CD14-positive monocyte (primary cell): ENCODE measurements at regions of chr10 and their contacts with region 1.

Region 1: GRCh38 chr10:124388823-124389612 is 29.7 kb downstream of the OAT start:
- DNase-seq: peak; percentile 86 to 90 (median 88)
- H3K4me3 ChIP-seq: peak overlapping the region; percentile 28 to 69 (median 35)
- H3K4me3 Mint-ChIP-seq: peak overlapping the region; percentile 52 to 55
- H3K27ac ChIP-seq: peak overlapping the region in 1 of 2 donors; percentile 72
- H3K27ac Mint-ChIP-seq: peak overlapping the region in 3 of 7 donors; percentile 22 to 71 (median 57)
- H3K4me1 ChIP-seq: peaks cover 13 to 15% of the 10 kb centered on the region in 2 donors
- H3K4me1 Mint-ChIP-seq: peaks cover 6% of the 10 kb centered on the region
- H3K27me3 ChIP-seq: peaks cover 0 to 16% of the 10 kb centered on the region in 2 donors
- H3K27me3 Mint-ChIP-seq: peaks cover 5 to 25% (median 18%) of the 10 kb centered on the region in 3 donors
- CTCF ChIP-seq: peak; percentile 91

Region 2: DNA sequence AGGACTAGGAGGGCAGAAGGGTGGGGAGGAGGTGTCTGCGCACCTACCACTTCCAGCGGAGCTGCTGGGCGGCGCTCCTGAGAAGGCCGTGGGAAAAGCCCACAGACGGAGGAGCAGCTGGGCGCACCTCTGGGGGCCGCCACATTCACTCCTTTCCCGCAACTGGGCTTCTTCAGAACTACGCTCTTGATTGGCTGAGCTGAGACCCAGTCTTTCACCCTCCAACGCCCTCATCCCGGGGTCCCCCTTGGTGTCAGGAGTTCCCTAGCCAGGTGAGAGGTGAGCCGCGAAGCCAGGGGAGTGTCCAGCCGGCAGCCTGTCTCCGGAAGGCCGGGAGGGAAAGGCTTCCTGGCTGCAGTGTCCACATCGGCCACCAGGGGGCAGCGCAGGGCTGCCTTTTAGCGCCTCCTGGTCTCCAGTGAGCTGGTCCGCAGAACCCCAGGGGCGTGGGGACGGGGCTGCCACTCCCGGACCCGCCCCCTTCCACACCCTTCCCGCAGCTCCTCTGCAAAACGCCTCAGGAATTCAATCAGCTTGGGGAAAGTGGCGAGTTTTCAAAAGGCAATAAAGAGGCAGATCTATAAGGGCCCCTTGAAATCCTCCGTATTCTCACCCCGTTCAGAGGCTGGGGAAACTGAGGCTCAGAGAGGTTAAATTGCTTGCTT is 394.5 kb before region 1 on chr10:
- intact Hi-C with region 1: loop called (anchors 1 to 5 kb)
- DNase-seq: peak; percentile 81 to 83 (median 81)
- H3K4me3 ChIP-seq: peak overlapping the region; percentile 21 to 75 (median 28)
- H3K4me3 Mint-ChIP-seq: peak overlapping the region; percentile 74 to 79
- H3K27ac ChIP-seq: peak overlapping the region in 1 of 2 donors; percentile 98
- H3K27ac Mint-ChIP-seq: peak overlapping the region; percentile 57 to 100 (median 98)
- H3K4me1 ChIP-seq: peaks cover 56 to 64% of the 10 kb centered on the region in 2 donors
- H3K4me1 Mint-ChIP-seq: peaks cover 63% of the 10 kb centered on the region
- H3K27me3 ChIP-seq: peaks cover 31 to 46% of the 10 kb centered on the region in 2 donors
- H3K27me3 Mint-ChIP-seq: peaks cover 47 to 58% (median 51%) of the 10 kb centered on the region in 3 donors
- CTCF ChIP-seq: peak; percentile 98

Region 3: GRCh38 chr10:124025660-124026588 is 363.1 kb before region 1 on chr10:
- intact Hi-C with region 1: loop called in 1 of 2 experiments (anchors 10 kb)
- DNase-seq: peak; percentile 56 to 68 (median 66)
- H3K4me3 ChIP-seq: no peak overlapping the region
- H3K4me3 Mint-ChIP-seq: peak overlapping the region in 1 of 2 donors; percentile 30
- H3K27ac ChIP-seq: no peak overlapping the region
- H3K27ac Mint-ChIP-seq: peak overlapping the region in 6 of 7 donors; percentile 8 to 81 (median 69)
- H3K4me1 ChIP-seq: peaks cover 12 to 38% of the 10 kb centered on the region in 2 donors
- H3K4me1 Mint-ChIP-seq: peaks cover 29% of the 10 kb centered on the region
- H3K27me3 ChIP-seq: peaks cover 0 to 16% of the 10 kb centered on the region in 2 donors
- H3K27me3 Mint-ChIP-seq: peaks cover 5 to 37% (median 35%) of the 10 kb centered on the region in 3 donors
- CTCF ChIP-seq: peak; percentile 69

Region 4: DNA sequence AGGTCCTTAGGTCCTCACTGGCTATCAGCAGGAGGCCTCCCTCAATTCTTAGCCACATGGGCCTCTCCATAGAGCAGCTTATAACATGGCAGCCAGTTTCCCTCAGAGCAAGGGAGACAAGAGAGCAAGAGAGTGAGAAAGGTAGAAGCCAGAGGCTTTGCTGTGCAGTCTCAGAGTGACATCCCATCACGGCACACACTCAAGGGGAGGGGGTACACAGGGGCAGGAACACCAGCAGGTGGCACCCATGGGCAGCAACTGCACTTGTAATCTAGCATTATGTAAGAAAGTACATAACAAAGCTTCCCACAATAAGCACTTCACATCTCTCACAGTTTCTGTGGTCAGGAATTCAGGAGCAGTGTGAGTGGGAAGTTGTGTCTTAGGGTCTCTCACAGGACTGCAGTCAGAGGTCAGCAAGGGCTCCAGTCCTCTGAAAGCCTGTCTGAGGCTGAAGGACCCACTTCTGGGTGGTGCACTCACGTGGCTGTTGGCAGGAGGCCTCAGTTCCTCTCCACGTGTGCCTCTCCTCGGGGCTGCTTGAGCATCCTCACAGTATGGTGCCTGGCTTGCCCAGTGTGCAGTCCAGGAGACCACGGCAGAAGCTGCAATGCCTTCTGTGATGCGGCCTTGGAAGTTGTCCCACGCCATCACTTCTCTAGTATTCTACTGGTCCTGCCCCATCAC is 129.7 kb before region 1 on chr10:
- intact Hi-C with region 1: loop called (anchors 2 to 10 kb)
- DNase-seq: peak; percentile 52 to 73 (median 62)
- H3K4me3 ChIP-seq: no peak overlapping the region
- H3K4me3 Mint-ChIP-seq: no peak overlapping the region
- H3K27ac ChIP-seq: peak overlapping the region in 1 of 2 donors; percentile 43
- H3K27ac Mint-ChIP-seq: peak overlapping the region in 2 of 7 donors; percentile 9 to 21
- H3K4me1 ChIP-seq: peaks cover 15 to 24% of the 10 kb centered on the region in 2 donors
- H3K4me1 Mint-ChIP-seq: peaks cover 29% of the 10 kb centered on the region
- H3K27me3 ChIP-seq: no peaks in the 10 kb centered on the region
- H3K27me3 Mint-ChIP-seq: peaks cover 3 to 6% (median 6%) of the 10 kb centered on the region in 3 donors
- CTCF ChIP-seq: peak; percentile 52

Region 5: GRCh38 chr10:124289851-124290795 is 98.9 kb before region 1 on chr10:
- intact Hi-C with region 1: loop called in 1 of 2 experiments (anchors 10 kb)
- DNase-seq: peak; percentile 90 to 96 (median 92)
- H3K4me3 ChIP-seq: peak overlapping the region in 1 of 3 experiments; percentile 9
- H3K4me3 Mint-ChIP-seq: peak overlapping the region in 1 of 2 donors; percentile 69
- H3K27ac ChIP-seq: peak overlapping the region; percentile 95 to 97
- H3K27ac Mint-ChIP-seq: peak overlapping the region; percentile 98 to 99 (median 99)
- H3K4me1 ChIP-seq: peaks cover 74 to 80% of the 10 kb centered on the region in 2 donors
- H3K4me1 Mint-ChIP-seq: peaks cover 80% of the 10 kb centered on the region
- H3K27me3 ChIP-seq: no peaks in the 10 kb centered on the region
- H3K27me3 Mint-ChIP-seq: peaks cover 0 to 12% (median 1%) of the 10 kb centered on the region in 3 donors
- CTCF ChIP-seq: no peak

Region 6: DNA sequence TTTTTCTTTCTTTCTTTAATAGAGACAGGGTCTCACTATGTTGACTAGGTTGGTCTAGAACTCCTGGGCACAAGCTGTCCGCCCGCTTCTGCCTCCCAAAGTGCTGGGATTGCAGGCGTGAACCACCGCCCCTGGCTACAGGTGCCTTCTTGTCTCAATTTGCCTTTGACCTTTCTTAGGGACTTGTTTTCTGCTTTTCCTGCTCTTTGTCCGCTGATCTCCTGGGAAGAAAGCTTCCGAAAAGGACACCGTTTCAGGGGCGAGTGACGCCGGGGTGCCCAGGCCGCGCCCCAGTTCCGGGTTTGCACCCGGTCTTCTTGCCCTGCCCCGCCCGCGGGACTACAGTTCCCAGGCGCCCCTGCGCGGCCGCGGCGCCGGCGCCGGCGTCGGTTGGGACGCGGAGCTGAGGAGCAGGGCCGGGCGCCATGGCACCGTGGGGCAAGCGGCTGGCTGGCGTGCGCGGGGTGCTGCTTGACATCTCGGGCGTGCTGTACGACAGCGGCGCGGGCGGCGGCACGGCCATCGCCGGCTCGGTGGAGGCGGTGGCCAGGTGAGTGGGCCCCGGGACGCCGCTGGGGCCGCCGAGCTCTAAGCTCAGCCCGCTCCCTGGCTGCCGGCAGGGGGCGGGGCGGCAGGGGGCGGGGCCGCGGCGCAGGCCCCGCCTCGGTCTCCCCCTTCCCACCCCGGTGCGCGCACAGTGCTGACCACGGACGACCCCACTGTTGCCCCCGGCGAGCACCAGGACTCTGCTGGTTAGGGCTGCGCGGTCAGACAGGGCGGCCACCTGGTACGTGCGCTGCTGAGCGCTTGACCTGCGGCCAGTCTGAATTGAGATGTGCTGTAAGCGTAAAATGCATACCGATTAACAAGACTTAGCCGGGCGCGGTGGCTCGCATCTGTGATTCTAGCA is 72.7 kb after region 1 on chr10 and contains the start of gene LHPP:
- intact Hi-C with region 1: no loop called
- DNase-seq: peak; percentile 74 to 81 (median 81)
- H3K4me3 ChIP-seq: peak within 1 kb of the TSS; percentile 51 to 87 (median 86)
- H3K4me3 Mint-ChIP-seq: peak within 1 kb of the TSS; percentile 86 to 97
- H3K27ac ChIP-seq: peak within 1 kb of the TSS; percentile 46 to 84
- H3K27ac Mint-ChIP-seq: peak within 1 kb of the TSS; percentile 83 to 98 (median 93)
- H3K4me1 ChIP-seq: peaks cover 17 to 23% of the 10 kb centered on the region in 2 donors
- H3K4me1 Mint-ChIP-seq: peaks cover 29% of the 10 kb centered on the region
- H3K27me3 ChIP-seq: peaks cover 0 to 10% of the 10 kb centered on the region in 2 donors
- H3K27me3 Mint-ChIP-seq: peaks cover 7 to 23% (median 18%) of the 10 kb centered on the region in 3 donors
- CTCF ChIP-seq: peak; percentile 70
- polyA plus RNA-seq, gene LHPP: 15.2 to 20.6 (median 19.5) TPM

Region 7: DNA sequence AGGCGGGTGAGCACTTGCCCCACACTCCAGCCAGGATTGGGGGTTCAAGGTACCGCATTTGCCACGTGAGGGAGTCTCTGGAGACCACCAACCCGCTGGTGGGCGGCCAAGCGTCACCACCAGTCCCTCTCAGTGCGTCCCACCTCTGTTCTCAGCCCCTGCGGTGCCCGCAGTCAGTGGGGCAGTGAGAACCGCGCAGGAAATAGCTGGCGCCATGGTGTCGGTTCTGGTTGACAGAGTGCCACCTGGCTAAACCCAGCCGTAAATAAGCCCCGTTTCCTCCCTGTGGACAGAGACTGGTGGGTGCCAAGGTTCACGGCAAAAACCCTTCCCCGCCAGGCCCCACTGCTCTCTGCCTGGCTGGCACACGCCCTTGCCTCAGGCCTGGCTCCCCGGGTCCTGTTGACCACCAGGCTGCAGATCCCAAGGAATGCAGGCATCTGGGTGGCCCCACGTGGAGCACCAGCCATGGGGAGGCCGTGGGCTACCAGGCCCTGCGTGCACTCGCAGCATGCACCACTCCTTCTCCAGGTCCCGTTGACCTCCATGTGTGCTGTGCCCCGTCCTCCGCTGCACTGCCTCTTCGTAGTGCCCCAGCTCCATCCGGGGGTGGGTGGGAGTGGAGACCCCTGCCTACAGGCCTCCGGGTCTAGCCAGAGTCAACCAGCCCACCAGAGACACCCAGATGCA is 212.6 kb after region 1 on chr10:
- intact Hi-C with region 1: no loop called
- DNase-seq: no peak
- H3K4me3 ChIP-seq: no peak overlapping the region
- H3K4me3 Mint-ChIP-seq: no peak overlapping the region
- H3K27ac ChIP-seq: no peak overlapping the region
- H3K27ac Mint-ChIP-seq: peak overlapping the region in 1 of 7 donors; percentile 65
- H3K4me1 ChIP-seq: peaks cover 3 to 4% of the 10 kb centered on the region in 2 donors
- H3K4me1 Mint-ChIP-seq: peaks cover 10% of the 10 kb centered on the region
- H3K27me3 ChIP-seq: no peaks in the 10 kb centered on the region
- H3K27me3 Mint-ChIP-seq: peaks cover 1 to 6% (median 4%) of the 10 kb centered on the region in 3 donors
- CTCF ChIP-seq: no peak